HEK293 (cell line): ENCODE measurements at regions of chr15 and their contacts with region 1.

Region 1: GRCh38 chr15:98442379-98442833 is 205.9 kb upstream of the IGF1R start:
- H3K4me3 ChIP-seq: no peak overlapping the region
- H3K27ac ChIP-seq: no peak overlapping the region
- H3K4me1 ChIP-seq: peaks cover 7% of the 10 kb centered on the region
- CTCF ChIP-seq: peak; percentile 72

Region 2: GRCh38 chr15:98428253-98428989 is 14.0 kb before region 1 on chr15:
- CTCF ChIA-PET with region 1: interaction called, 33 read pairs
- POLR2A ChIA-PET with region 1: no interaction called
- H3K4me3 ChIP-seq: peak overlapping the region; percentile 43
- H3K27ac ChIP-seq: no peak overlapping the region
- H3K4me1 ChIP-seq: no peaks in the 10 kb centered on the region
- CTCF ChIP-seq: peak; percentile 78

Region 3: GRCh38 chr15:98513428-98513991 is 71.1 kb after region 1 on chr15:
- CTCF ChIA-PET with region 1: interaction called, 13 read pairs
- POLR2A ChIA-PET with region 1: interaction called, 5 read pairs
- H3K4me3 ChIP-seq: no peak overlapping the region
- H3K27ac ChIP-seq: no peak overlapping the region
- H3K4me1 ChIP-seq: no peaks in the 10 kb centered on the region
- CTCF ChIP-seq: no peak

Region 4: GRCh38 chr15:98658831-98659699 is 216.7 kb after region 1 on chr15:
- CTCF ChIA-PET with region 1: interaction called, 25 read pairs
- POLR2A ChIA-PET with region 1: no interaction called
- H3K4me3 ChIP-seq: no peak overlapping the region
- H3K27ac ChIP-seq: no peak overlapping the region
- H3K4me1 ChIP-seq: peaks cover 24% of the 10 kb centered on the region
- CTCF ChIP-seq: peak; percentile 42; the same call in 1 of the 2 replicates

Region 5: DNA sequence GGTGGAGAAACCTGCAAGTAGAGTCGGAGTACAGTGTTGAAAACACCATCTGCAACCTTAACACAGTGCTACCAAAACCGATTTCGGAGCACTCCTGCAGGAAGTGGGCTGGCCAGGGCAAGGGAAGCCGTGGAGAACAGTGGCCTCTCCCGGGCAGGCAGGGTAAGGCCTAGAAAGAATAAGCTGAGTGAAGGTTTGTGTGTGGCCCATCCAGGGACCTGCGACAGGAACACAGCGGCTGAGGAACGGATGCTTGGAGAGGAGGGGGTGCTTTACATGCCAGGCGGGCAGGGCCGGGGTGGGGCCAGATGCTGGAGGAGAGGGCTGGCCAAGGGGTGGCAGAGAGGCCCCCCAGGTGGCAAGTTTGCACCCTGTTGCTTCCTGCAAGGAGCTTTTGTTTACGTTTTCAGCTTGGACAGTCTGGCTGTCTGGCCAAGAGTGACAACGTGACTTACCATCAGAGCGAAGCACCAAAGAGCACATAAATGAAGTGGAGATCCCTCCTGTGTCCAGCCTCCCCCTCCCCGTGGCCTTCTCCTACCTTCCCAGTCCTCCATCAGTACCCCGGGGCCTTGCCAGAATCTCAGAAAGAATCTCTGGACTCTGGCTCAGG is 408.7 kb after region 1 on chr15:
- CTCF ChIA-PET with region 1: interaction called, 11 read pairs
- POLR2A ChIA-PET with region 1: no interaction called
- H3K4me3 ChIP-seq: no peak overlapping the region
- H3K27ac ChIP-seq: peak overlapping the region; percentile 0; the same call in 1 of the 2 replicates
- H3K4me1 ChIP-seq: peaks cover 37% of the 10 kb centered on the region
- CTCF ChIP-seq: peak; percentile 89

Region 6: DNA sequence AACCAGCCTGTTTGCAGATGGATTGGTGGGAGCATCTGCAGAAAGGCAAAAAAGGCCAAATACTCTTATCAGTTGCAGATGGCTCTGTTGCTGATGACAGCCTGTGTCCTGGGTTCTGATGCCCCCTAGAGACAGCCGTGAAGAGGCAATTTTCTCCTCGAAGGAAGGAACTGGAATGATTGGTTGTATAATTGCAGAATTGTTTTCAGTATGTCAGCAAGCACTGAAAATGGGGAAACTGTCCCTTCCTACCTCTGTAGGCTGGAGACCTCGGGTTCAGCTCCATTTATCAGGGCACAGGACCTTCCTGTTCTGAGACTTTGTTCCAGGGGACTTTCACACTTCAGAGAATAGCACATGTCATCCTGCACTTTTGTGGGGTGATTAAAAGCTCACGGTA is 462.1 kb after region 1 on chr15:
- CTCF ChIA-PET with region 1: interaction called, 12 read pairs
- POLR2A ChIA-PET with region 1: no interaction called
- H3K4me3 ChIP-seq: no peak overlapping the region
- H3K27ac ChIP-seq: no peak overlapping the region
- H3K4me1 ChIP-seq: no peaks in the 10 kb centered on the region
- CTCF ChIP-seq: peak; percentile 63; the same call in 1 of the 2 replicates

Region 7: DNA sequence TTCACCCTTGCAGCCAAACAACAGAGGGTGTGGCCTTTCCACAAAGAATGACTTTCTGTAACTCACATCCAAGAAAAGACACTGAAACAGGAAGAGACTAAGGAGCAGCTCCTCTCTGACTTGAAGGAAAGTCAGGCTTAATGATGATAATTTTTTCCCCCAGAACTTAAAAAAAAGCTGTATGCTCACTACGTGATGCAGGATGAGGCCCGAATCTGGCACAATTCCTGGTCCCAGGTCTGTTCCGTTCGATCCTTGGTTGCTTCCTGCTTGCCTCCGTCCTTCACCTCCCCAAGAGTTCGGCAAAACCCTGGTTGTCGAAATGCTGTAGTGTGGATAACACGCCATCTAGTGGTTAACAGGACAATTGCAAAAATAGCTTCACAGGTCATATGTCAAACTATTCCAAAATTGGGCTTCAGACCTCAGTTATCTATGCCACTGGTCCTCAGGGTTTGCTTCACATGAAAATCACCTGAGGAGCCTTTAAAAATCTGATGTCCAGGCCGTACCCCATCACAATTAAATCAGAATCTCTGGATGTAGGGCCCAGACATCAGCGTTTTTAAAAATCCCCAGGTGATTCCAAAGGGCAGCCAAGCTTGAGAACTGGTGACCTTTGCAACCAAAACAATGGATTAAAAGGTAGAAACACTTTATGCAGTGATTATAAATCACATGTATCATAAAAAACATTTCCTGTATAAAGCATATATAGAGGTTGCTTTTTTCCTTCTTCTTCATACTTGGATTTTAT is 634.3 kb after region 1 on chr15:
- CTCF ChIA-PET with region 1: interaction called, 29 read pairs
- POLR2A ChIA-PET with region 1: no interaction called
- H3K4me3 ChIP-seq: peak overlapping the region; percentile 1; the same call in 1 of the 2 replicates
- H3K27ac ChIP-seq: no peak overlapping the region
- H3K4me1 ChIP-seq: no peaks in the 10 kb centered on the region
- CTCF ChIP-seq: peak; percentile 70; the same call in 1 of the 2 replicates